ENCODE measurements at regions of chr18 and their contacts with region 1.

Region 1: DNA sequence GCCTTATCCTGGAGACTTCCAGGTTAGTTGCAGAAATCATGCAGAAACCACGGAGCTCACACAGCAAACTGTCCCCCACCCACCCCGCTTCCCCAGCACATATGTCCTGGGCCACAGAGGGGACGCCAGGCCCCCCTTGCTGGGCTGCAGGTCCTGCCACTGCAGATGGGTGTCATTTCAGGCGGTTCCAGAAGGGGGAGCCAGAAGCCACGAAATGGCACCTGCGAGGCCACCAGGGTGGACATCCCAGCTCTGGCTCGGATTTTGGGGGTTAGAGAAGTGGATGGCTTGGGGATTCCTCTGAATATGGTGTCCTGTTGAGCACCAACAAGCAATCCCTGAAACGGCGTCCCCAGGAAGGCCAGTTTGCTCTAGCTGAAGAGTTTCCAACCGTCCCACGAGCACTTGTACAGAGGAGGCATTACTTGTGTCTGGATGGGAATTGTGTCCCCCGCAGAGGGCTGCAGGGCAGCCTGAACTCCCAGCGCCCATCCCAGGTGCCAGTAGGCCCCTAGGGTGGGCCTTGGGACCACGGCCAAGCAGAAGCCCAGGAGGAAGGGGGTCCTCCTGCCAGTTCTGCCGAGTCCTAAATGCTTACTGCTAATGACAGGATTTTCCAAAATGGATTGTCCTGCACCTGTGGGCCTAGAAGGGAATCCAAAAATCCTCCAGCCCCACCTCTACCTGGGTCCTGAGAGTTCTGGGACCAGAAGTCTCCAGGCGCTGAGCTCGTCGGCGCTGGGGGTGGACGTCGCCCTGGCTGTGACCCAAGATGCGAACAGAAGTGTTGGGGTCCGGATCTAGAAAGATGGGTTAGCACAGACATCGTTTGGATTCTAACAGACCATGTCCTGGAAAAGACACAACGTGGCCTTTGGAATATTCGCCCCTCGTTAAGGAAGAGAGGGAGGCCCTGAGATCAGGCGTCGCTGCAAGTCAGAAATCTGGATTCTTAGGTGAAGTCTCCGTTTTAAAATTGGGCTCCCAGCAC is 14.6 kb upstream of the NFATC1 start:
- DNase-seq: peak; percentile 58 to 96 (median 80)

Region 2: GRCh38 chr18:79528846-79529245 is 147.7 kb after region 1 on chr18:
- intact Hi-C with region 1: loop called (anchors 1 kb)
- DNase-seq: peak in 8 of 10 donors; percentile 36 to 84 (median 72)

Region 3: DNA sequence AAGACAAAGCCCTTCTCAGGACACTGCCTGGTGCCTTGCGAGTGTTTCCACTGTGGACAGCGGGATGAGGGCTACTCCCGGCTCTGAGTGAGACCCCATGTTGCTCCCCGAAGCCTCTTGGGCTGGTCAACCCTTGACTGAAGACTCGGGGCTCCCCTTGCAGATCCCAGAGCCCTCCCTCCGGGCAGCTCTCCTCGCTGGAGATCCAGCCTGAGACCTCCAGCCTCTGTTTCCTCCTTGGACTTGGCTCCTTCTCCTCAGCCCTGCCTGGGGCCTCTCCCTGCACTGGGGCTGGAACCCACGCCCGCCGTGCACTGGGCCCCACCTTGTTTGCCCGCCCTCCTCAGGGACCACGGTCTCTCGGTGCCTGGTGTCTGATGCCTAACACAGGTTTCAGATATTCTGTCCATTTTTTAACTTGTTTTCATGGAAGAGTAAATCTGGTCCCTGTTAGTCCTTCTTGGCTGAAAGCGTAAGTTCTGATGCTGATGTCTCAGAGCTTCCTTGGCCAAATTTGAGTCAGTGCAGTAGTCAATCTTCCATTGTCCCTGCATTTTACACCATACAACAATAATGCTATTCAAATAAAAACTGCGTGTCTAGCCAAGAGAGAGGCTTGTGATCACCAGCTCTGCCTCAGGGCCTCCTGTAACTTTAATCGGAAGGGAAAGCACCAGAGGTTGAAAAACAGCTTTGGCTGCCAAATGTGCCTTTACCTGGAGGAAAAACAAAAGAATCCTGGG is 159.2 kb after region 1 on chr18:
- intact Hi-C with region 1: no loop called
- DNase-seq: peak in 2 of 10 donors; percentile 76 to 81